Activated B cell treated with CpG ODN at 0.5 μM for 24 hours (primary cell): ENCODE measurements at regions of chr6 and their contacts with region 1.

Region 1: DNA sequence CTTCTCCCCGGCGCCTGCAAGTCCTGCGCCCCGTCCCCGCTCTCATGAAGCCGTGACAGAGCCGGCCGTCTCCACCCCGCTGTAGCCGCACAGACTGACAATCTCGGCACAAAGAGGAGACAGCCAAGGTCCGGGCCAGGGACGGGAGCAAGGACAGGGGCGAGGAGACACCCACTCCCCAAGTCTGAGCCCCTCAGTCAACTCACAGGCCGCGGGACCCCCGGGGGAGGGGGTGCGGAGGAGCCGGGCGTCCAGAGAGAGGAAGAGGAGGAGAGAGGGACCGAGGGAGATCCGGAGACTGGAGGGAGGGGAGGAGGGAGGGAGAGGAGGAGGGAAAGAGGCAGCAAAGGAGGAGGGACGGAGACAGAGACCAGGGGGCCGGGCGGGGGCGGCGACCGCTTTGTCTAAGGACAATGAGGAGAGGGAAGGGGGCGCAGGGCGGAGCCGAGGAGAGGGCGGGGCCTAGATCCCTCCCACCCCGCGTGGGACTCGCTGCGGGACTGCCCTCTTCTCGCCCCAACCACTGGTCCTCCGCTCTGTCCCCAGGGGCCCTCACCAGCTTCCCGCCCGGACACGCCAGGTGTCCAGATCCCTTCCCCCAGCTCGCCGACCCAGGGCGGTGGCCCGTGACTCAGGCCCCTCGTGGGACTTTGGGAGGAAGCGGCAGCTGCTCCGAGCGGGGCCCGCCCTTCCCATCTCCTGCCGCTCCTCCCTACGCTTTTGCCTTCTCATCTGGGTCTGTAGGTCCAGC is 638 bp upstream of the PPP1R18 start:
- DNase-seq: peak; percentile 82
- ATAC-seq: peak; percentile 56
- H3K4me3 Mint-ChIP-seq: peak overlapping the region; percentile 92
- H3K27ac Mint-ChIP-seq: peak overlapping the region; percentile 99
- H3K4me1 Mint-ChIP-seq: peaks cover 78% of the 10 kb centered on the region
- H3K27me3 Mint-ChIP-seq: no peaks in the 10 kb centered on the region
- CTCF ChIP-seq: no peak

Region 2: GRCh38 chr6:30700340-30700739 is 13.3 kb after region 1 on chr6:
- CTCF ChIA-PET with region 1: interaction called, 3 read pairs
- POLR2A ChIA-PET with region 1: interaction called, 12 read pairs
- intact Hi-C with region 1: loop called (anchors 1 kb)
- DNase-seq: no peak
- ATAC-seq: no peak
- H3K4me3 Mint-ChIP-seq: no peak overlapping the region
- H3K27ac Mint-ChIP-seq: no peak overlapping the region
- H3K4me1 Mint-ChIP-seq: no peaks in the 10 kb centered on the region
- H3K27me3 Mint-ChIP-seq: no peaks in the 10 kb centered on the region
- CTCF ChIP-seq: no peak

Region 3: DNA sequence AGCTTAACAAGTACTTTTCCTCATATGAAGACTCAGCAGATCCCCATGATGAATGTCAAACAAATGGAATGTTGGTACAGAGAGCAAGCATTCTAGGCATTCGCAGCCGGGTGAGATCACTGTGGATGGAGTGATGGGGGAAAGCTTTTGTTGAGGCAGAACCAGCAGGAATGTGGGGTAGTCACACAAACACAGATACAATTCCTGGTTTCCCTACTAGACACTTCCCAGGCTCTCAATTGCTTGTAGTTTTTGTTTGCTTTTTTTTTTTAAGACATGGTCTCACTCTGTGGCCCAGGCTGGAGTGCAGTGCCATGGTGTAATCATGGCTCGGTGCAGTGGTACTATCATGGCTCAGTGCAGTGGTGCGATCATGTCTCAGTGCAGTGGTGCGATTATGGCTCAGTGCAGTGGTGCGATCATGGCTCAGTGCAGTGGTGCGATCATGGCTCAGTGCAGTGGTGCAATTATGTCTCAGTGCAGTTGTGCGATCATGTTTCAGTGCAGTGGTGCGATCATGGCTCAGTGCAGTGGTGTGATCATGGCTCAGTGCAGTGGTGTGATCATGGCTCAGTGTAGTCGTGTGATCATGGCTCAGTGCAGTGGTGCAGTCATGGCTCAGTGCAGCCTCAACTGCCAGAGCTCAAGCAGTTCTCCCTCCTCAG is 72.6 kb after region 1 on chr6:
- CTCF ChIA-PET with region 1: no interaction called
- POLR2A ChIA-PET with region 1: no interaction called
- intact Hi-C with region 1: no loop called
- DNase-seq: no peak
- ATAC-seq: no peak
- H3K4me3 Mint-ChIP-seq: no peak overlapping the region
- H3K27ac Mint-ChIP-seq: peak overlapping the region; percentile 41
- H3K4me1 Mint-ChIP-seq: peaks cover 18% of the 10 kb centered on the region
- H3K27me3 Mint-ChIP-seq: peaks cover 14% of the 10 kb centered on the region
- CTCF ChIP-seq: no peak

Region 4: DNA sequence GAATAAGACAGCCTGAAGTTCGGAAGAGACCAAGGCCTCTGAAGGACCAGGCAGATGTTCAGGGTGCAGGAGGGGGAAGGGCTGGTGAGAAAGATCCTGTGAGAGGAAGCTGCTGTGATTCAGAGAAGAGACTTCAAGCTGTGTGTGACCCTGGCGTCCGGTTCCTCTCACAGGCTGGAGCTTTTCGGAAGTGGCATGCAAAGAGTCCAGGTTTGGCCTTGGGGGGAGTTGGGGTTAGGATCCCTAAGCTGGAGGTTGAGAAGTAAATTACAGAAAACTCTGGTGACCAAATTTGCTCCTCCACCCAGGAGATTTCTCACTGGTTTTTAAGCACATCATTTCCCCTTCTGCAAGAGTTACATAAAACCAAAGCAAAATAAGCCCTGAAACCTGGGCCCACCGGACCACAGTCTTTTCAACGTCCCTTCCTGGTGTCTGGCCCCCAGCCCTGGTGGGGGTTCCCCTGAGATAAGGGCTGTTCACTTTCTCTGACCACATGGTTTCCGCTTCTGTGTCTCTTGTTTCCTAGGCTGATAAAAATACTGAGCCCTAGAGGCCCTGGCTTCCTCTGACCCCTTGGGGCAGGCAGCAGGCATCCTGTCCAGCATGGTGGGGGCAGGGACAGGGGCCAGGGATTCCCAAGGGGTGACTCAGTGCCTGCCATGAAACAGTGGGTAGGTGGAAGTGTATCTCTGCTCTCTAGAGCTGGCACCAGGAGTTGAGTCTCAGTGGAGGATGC is 873.0 kb after region 1 on chr6:
- CTCF ChIA-PET with region 1: no interaction called
- POLR2A ChIA-PET with region 1: no interaction called
- intact Hi-C with region 1: loop called (anchors 10 kb)
- DNase-seq: peak; percentile 52
- ATAC-seq: peak; percentile 67
- H3K4me3 Mint-ChIP-seq: peak overlapping the region; percentile 83
- H3K27ac Mint-ChIP-seq: peak overlapping the region; percentile 94
- H3K4me1 Mint-ChIP-seq: peaks cover 90% of the 10 kb centered on the region
- H3K27me3 Mint-ChIP-seq: no peaks in the 10 kb centered on the region
- CTCF ChIP-seq: no peak